A549 (cell line): ENCODE measurements at regions of chr5 and their contacts with region 1.

Region 1: GRCh38 chr5:76805850-76806505 is 12.9 kb upstream of the F2RL1 start:
- DNase-seq: peak; percentile 90 to 98
- ATAC-seq: peak; percentile 83 to 89
- H3K4me3 ChIP-seq: peak overlapping the region; percentile 22; the same call in 1 of the 3 replicates
- H3K27ac ChIP-seq: peak overlapping the region; percentile 90 to 98
- H3K4me1 ChIP-seq: peaks cover 79% of the 10 kb centered on the region
- CTCF ChIP-seq: no peak
- EP300 ChIP-seq: peak; percentile 99
- POLR2A ChIP-seq: no peak
- RAD21 ChIP-seq: peak; percentile 13 to 72; a peak in 4 of 5 replicates

Region 2: DNA sequence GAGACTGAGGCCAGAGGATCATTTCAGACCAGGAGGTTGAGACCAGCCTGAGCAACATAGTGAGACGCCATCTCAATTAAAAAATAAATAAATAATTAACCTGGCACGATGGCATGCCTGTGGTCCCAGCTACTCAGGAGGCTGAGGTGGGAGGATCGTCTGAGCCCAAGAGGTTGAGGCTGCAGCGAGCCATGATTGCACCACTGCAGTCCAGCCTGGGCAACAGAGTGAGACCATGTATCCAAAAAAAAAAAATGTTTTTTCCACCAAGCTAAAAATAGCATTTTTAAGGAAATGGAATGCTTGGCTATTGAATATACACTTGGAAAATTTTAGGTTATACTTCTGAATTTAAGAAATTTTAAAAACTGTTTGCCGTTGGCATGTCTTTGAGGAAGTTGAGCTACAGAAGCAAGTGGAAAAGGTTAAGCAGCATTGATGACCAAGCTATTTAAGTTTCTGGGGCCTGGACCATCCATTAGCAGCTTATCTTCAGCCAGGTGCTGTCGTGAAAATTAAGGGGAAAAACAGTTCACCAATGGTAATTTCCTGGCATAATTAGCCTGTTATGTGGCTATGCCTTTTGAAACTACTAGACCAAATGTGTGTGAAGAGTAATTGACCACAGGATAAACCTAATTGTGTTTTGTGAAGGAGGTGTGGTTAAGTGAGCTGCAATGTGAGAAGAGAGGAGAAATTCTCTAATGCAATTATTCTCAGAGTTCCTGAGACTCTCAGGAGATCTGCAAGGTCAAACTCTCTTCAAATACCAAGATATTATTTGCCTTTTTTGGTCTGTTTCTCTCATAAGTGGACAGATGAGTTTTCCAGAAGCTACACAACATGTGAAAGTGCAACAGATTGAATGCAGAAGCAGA is 69.1 kb before region 1 on chr5:
- CTCF ChIA-PET with region 1: interaction called, 3 read pairs
- POLR2A ChIA-PET with region 1: interaction called, 12 read pairs
- DNase-seq: no peak
- ATAC-seq: no peak
- H3K4me3 ChIP-seq: no peak overlapping the region
- H3K27ac ChIP-seq: peak overlapping the region; percentile 71 to 82
- H3K4me1 ChIP-seq: peaks cover 44% of the 10 kb centered on the region
- CTCF ChIP-seq: no peak
- EP300 ChIP-seq: no peak
- POLR2A ChIP-seq: no peak
- RAD21 ChIP-seq: no peak

Region 3: DNA sequence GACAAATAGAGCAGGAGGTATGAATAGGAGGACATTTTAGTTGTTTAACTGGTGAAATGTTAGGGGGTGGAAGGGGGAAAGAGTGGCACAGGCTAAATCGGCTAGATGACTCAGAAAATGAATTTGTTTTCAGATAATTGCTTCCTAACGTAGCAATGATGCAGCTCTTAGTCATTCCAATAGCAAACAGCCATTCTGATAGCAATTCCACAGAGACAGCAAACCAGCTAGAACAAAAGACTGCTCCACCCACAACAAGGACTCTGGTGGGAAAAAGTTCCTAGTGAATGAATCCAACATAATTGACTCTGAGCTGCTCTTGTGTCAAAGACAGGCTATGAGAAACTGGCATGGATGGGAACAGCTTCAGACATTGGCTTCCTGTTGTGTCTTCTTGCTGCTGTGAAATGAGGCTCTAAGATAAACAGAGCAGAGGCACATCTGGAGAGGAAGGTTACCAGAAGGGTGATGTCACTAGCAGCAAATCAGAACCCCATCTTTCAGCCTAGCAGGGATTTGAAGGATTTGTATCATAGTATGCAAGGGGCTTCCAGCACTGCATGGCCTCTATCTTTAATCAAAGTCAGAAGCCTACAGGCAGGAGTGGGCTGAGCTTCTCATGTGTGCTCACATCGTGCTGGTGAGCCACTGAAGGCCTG is 15.2 kb before region 1 on chr5:
- CTCF ChIA-PET with region 1: interaction called, 13 read pairs
- POLR2A ChIA-PET with region 1: interaction called, 48 read pairs
- DNase-seq: peak; percentile 76 to 94
- ATAC-seq: peak; percentile 81 to 82
- H3K4me3 ChIP-seq: no peak overlapping the region
- H3K27ac ChIP-seq: peak overlapping the region; percentile 82 to 87
- H3K4me1 ChIP-seq: peaks cover 76% of the 10 kb centered on the region
- CTCF ChIP-seq: no peak
- EP300 ChIP-seq: peak; percentile 83; a peak in 2 of 5 replicates
- POLR2A ChIP-seq: no peak
- RAD21 ChIP-seq: peak; percentile 7 to 38; a peak in 3 of 5 replicates

Region 4: DNA sequence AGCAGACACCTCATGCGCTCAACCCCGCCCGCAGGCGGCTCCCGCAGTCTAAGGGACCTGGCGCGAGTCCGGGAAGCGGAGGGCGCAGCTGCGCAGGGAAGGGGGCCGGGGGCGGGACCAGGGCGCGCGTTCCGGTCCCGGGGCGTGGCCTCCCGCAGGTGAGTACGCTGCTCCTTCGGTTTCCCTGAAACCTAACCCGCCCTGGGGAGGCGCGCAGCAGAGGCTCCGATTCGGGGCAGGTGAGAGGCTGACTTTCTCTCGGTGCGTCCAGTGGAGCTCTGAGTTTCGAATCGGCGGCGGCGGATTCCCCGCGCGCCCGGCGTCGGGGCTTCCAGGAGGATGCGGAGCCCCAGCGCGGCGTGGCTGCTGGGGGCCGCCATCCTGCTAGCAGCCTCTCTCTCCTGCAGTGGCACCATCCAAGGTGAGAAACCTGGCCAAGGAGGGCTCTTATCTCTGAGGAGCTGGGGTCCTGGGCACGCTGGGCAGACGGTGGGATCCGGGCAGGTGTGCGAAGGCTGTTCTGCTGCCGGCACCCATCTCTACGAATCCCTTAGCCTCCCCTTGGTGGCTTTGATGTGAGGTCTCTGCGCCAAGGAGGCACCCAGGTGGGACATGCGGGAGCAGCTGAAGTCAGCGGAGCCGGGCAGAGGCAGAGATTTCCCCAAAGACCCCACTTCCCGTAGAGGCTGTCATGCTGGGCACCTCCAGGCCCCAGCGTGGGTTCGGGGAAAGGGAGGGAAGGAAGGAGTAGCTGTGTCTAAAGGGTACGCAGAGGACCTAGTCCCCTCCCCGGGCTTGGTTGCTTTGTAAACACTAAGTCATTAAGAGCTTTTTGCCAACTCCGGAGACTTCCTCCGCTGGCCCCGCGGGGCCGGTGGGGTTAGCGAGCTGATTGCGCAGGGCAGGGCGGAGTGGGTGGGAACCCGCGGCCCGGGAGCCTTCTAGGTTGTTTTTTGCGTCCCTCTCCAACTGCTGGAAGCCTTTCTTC is 13.2 kb after region 1 on chr5 and contains the start of gene F2RL1:
- CTCF ChIA-PET with region 1: interaction called, 31 read pairs
- POLR2A ChIA-PET with region 1: interaction called, 218 read pairs
- DNase-seq: peak; percentile 88 to 91
- ATAC-seq: peak; percentile 78 to 81
- H3K4me3 ChIP-seq: peak within 1 kb of the TSS; percentile 88
- H3K27ac ChIP-seq: peak within 1 kb of the TSS; percentile 83 to 94
- H3K4me1 ChIP-seq: peaks cover 74% of the 10 kb centered on the region
- CTCF ChIP-seq: no peak
- EP300 ChIP-seq: 0 out of 5 replicates have a peak, but pooled peaks of 1 of the 2 experiments have one; percentile 10
- POLR2A ChIP-seq: peak; percentile 47
- RAD21 ChIP-seq: peak; percentile 17 to 31; a peak in 1 of 5 replicates
- polyA plus RNA-seq, gene F2RL1: 226 and 328 TPM in 2 replicates

Region 5: GRCh38 chr5:77356740-77357139 is 550.8 kb after region 1 on chr5:
- CTCF ChIA-PET with region 1: no interaction called
- POLR2A ChIA-PET with region 1: no interaction called
- DNase-seq: no peak
- ATAC-seq: no peak
- H3K4me3 ChIP-seq: no peak overlapping the region
- H3K27ac ChIP-seq: no peak overlapping the region
- H3K4me1 ChIP-seq: peaks cover 9% of the 10 kb centered on the region; the same call in 2 of the 3 replicates
- CTCF ChIP-seq: no peak
- EP300 ChIP-seq: no peak
- POLR2A ChIP-seq: no peak
- RAD21 ChIP-seq: no peak

Region 6: GRCh38 chr5:77637170-77637997 is 831.4 kb after region 1 on chr5:
- CTCF ChIA-PET with region 1: no interaction called
- POLR2A ChIA-PET with region 1: interaction called, 16 read pairs
- DNase-seq: no peak
- ATAC-seq: no peak
- H3K4me3 ChIP-seq: peak overlapping the region; percentile 28; the same call in 1 of the 3 replicates
- H3K27ac ChIP-seq: no peak overlapping the region
- H3K4me1 ChIP-seq: 0 out of 3 replicates have a peak, but pooled peaks cover 2% of the 10 kb centered on the region
- CTCF ChIP-seq: no peak
- EP300 ChIP-seq: no peak
- POLR2A ChIP-seq: no peak
- RAD21 ChIP-seq: no peak